Activated T-helper 2 cell treated with anti-CD3 and anti-CD28 coated beads, Interferon-gamma antibody, Interleukin-2, Interleukin-4, amounts not matched to agents 10 μg/mL and 5 μg/mL and 100 μg/mL, durations not matched to agents 14 hours and 24 hours and 36 hours (primary cell): ENCODE measurements at regions of chr9 and their contacts with region 1.

Region 1: DNA sequence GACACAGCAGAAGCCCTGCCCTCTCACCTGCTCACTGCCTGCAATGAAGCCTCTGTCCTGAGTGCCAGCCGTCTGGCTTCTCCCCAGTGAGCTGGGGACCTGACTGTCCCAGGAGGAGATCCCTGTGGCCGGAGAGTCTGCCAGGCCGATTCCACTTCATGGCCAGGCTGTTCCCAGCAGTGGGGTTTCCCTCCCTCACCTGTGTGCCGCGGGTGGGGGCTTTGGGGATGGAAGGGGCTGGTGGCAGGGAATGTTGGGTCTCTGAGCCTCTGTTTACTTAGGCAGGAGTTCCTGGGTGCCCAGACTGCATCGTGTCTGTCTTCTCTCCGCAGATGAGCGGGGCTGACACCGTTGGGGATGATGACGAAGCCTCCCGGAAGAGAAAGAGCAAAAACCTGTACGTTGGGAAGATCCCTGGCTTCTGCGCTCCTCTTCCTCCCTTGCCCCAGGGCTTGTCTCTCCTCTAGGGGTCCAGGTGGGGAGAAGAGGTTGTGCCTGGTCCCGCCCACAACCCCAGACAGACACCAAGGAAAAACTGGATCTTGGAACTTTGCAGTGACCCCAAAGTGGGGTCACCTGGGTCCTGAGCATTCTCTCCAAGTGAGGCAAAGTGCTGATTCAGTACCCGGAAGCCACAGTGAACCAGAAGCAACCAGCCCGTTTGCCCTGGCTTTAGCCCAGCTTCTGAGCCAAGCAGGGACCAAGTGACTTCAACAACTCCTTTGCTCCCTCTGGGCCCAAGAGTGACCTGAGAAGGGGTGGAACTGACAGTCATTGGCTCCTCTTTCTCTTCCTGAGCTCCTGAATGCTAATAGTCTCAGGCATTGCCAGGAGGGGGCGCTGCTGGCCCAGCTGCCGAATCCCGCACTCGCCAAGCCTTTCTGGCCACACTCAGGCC is 127.7 kb downstream of the RGS3 start:
- DNase-seq: peak; percentile 44
- H3K4me3 Mint-ChIP-seq: no peak overlapping the region
- H3K27ac Mint-ChIP-seq: peak overlapping the region; percentile 60
- H3K4me1 Mint-ChIP-seq: peaks cover 44% of the 10 kb centered on the region
- H3K27me3 Mint-ChIP-seq: no peaks in the 10 kb centered on the region

Region 2: GRCh38 chr9:113446323-113446740 is 144.9 kb before region 1 on chr9:
- intact Hi-C with region 1: loop called (anchors 2 kb)
- DNase-seq: no peak
- H3K4me3 Mint-ChIP-seq: no peak overlapping the region
- H3K27ac Mint-ChIP-seq: no peak overlapping the region
- H3K4me1 Mint-ChIP-seq: peaks cover 3% of the 10 kb centered on the region
- H3K27me3 Mint-ChIP-seq: no peaks in the 10 kb centered on the region

Region 3: GRCh38 chr9:113602126-113603044 is 11.1 kb after region 1 on chr9:
- intact Hi-C with region 1: loop called (anchors 1 kb)
- DNase-seq: no peak
- H3K4me3 Mint-ChIP-seq: no peak overlapping the region
- H3K27ac Mint-ChIP-seq: peak overlapping the region; percentile 77
- H3K4me1 Mint-ChIP-seq: peaks cover 16% of the 10 kb centered on the region
- H3K27me3 Mint-ChIP-seq: no peaks in the 10 kb centered on the region

Region 4: DNA sequence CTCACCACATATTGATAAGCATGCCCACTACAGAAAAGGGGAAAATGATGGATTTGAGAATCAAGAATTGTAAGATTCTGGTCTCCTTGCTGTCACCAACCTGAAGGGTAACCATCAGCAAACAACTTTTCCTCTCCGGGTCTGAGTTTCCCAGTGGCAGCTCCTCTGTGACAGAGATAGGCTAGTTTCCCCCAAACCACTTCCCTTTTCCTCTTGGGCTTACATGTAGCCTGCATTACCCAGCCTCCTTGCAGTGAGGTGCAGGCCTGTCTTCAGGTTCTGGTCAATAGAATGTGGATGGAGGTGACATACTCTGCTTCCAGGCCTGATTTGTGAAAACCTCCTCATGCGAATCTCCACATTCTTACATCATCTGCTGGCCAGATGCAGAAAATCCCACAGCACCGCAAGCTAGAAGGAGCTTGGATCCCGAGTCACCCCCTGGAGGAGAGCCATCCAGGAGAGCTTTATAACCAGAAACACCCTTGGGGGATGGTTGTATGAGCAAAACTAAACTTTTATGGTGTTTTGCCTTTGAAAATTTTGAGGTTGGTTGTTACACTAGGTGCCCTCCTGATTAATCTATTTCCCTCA is 78.4 kb after region 1 on chr9:
- intact Hi-C with region 1: no loop called
- DNase-seq: no peak
- H3K4me3 Mint-ChIP-seq: no peak overlapping the region
- H3K27ac Mint-ChIP-seq: no peak overlapping the region
- H3K4me1 Mint-ChIP-seq: no peaks in the 10 kb centered on the region
- H3K27me3 Mint-ChIP-seq: peaks cover 7% of the 10 kb centered on the region